Esophagus muscularis mucosa (tissue), 4 donors: ENCODE measurements at regions of chr7 and their contacts with region 1.

Region 1: DNA sequence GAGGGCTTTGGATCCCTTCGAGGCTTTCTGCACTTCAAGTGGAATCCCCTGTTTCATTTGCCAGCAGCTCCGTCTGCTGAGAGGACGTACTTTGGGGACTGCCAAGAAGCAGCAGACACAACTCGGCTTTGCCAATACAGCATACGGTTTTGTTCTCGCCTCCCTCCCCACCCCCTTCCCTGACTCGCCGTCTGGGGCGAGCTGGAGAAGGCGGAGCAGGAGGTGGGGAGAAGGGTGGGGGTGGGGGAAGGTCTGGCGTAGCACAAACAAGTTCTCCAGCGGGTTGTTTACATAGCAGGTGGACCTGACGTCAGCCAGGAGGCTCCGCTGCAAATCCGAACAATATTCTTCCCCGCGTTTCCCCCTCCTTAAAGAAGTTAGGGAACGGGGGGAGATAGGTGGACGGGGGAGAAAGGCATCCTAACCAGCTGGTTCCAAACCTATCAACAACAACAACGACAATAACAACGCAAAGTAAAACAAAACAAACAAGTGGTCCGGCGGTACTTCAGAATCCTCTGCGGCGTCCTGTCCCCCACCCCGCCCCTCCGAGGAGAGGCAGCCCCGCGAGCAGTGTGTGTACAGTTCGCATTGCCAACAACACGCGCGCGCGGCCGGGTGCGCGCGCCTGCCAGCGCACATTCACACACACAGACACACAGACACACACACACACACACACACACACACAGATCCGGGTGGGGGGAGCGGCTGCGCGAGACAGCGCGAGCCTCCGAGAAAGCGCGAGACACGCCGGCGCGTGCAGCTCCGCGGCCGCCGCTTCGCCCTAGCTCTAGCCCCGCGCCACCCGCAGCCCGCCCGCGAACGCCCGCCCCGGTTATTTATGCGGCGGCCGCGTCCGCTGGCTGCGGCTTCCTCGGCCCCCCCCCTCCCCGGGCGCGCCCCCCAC is 167.0 kb upstream of the PPP1R3A start:
- DNase-seq: peak; percentile 95
- H3K4me3 ChIP-seq: peak overlapping the region; percentile 83 to 90 (median 85)
- H3K27ac ChIP-seq: peak overlapping the region; percentile 97 to 98 (median 98)
- H3K4me1 ChIP-seq: peaks cover 28 to 50% (median 43%) of the 10 kb centered on the region in 4 donors
- H3K27me3 ChIP-seq: peaks cover 0 to 30% (median 0%) of the 10 kb centered on the region in 4 donors
- CTCF ChIP-seq: no peak
- EP300 ChIP-seq: peak; percentile 45
- POLR2A ChIP-seq: peak; percentile 40

Region 2: GRCh38 chr7:114148779-114149178 is 62.9 kb after region 1 on chr7:
- intact Hi-C with region 1: no loop called
- DNase-seq: no peak
- H3K4me3 ChIP-seq: no peak overlapping the region
- H3K27ac ChIP-seq: no peak overlapping the region
- H3K4me1 ChIP-seq: peaks cover 0 to 28% (median 26%) of the 10 kb centered on the region in 4 donors
- H3K27me3 ChIP-seq: no peaks in the 10 kb centered on the region
- CTCF ChIP-seq: no peak
- EP300 ChIP-seq: no peak
- POLR2A ChIP-seq: no peak

Region 3: GRCh38 chr7:114419441-114420272 is 333.8 kb after region 1 on chr7:
- intact Hi-C with region 1: loop called (anchors 2 kb)
- DNase-seq: no peak
- H3K4me3 ChIP-seq: peak overlapping the region; percentile 45 to 58 (median 55)
- H3K27ac ChIP-seq: peak overlapping the region; percentile 82 to 83 (median 82)
- H3K4me1 ChIP-seq: peaks cover 0 to 46% (median 40%) of the 10 kb centered on the region in 4 donors
- H3K27me3 ChIP-seq: no peaks in the 10 kb centered on the region
- CTCF ChIP-seq: no peak
- EP300 ChIP-seq: no peak
- POLR2A ChIP-seq: no peak

Region 4: GRCh38 chr7:114663502-114663901 is 577.7 kb after region 1 on chr7:
- intact Hi-C with region 1: loop called (anchors 5 kb)
- DNase-seq: no peak
- H3K4me3 ChIP-seq: no peak overlapping the region
- H3K27ac ChIP-seq: no peak overlapping the region
- H3K4me1 ChIP-seq: peaks cover 0 to 48% (median 47%) of the 10 kb centered on the region in 4 donors
- H3K27me3 ChIP-seq: no peaks in the 10 kb centered on the region
- CTCF ChIP-seq: peak; percentile 42 to 53 (median 44)
- EP300 ChIP-seq: no peak
- POLR2A ChIP-seq: no peak

Region 5: DNA sequence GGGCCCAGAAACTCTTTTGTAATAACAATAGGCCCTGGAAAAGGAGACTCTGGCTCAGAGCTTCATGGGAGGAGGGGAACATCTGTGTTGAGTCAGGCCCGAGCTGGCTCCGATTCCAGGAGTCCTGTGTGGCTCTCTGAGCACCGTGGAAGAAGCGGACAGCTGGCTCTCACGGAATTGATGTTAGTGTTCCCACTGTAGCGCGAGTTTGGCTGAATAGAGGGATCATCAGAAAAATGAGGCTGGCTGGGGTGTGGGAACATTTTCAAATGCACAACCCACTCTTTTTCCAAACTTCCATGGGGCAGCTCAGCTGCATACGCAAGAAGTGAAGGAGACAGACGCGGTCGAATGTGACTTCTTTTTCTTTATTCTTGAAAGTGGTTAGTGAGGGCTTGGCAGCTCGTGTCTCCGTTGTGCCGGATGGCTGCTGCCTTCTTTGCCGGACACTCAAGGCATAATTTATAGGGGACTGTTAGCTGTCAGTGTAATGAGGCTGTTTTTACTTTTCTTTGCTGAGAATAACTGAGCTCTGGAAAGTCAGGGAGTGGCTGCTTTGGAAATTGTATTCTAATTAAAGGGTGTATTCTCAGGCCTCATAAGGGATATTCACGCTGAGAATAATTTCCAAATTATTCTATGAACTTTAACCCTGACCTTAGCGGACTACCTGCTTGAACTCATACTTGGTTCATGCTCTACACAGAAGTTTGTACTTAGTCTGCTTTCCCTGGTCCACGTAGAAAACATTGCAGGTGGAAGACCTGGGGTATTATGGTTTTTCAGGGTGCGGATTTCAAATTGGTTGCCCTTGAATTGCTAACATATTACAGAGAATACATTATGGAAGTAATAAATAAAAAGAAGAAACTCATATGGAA is 859.1 kb after region 1 on chr7:
- intact Hi-C with region 1: loop called (anchors 10 kb)
- DNase-seq: peak; percentile 94
- H3K4me3 ChIP-seq: peak overlapping the region; percentile 39 to 50 (median 44)
- H3K27ac ChIP-seq: peak overlapping the region; percentile 69 to 83 (median 75)
- H3K4me1 ChIP-seq: peaks cover 5 to 51% (median 42%) of the 10 kb centered on the region in 4 donors
- H3K27me3 ChIP-seq: no peaks in the 10 kb centered on the region
- CTCF ChIP-seq: no peak
- EP300 ChIP-seq: no peak
- POLR2A ChIP-seq: no peak